H1 (cell line): ENCODE measurements at regions of chr10 and their contacts with region 1.

Region 1: DNA sequence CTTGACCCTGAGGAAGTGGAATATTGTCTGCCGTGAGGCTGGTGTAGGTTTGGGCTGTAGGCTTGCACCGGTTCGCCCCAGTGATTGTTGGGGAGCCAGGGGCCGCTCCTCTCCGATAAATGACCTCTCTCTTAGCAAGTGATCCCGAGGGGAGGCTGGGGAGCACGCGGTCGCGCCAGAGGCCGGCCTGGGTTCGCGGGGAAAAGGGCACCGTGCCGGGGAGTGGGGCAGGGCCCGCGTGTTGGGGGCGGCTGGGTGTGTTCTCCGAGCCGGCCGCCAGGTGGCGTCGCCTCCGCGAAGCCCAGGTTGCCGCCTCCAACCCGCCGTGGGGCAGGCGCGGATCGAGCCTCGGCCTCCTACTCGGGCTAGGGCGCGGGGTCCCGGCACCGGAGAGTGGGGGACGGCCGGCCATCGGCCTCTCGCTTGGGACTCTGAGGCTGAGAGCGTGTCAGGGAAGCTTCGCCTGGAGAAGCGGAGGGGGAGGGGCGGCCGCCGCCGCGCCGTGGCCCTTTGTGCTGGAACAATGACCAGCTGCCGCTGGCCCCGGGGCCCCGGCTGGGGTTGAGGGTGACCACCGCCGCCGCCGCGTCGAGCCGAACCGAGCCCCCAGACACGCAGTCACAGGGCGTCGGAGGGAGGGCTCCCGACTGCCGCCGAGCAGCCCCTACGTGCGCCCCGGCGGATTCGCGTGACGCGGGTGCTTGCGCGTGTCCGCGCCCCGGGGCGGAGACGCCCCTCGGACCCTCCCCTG is 442 bp upstream of the LZTS2 start:
- DNase-seq: peak in 1 of 2 experiments; percentile 87
- H3K4me3 ChIP-seq: peak overlapping the region; percentile 75 to 90 (median 76)
- H3K27ac ChIP-seq: peak overlapping the region; percentile 80; the same call in 1 of the 2 replicates
- H3K4me1 ChIP-seq: peaks cover 4 to 24% (median 14%) of the 10 kb centered on the region in 4 experiments
- H3K27me3 ChIP-seq: no peaks in the 10 kb centered on the region
- CTCF ChIP-seq: peak in 2 of 3 experiments; percentile 69 to 87; a peak in 3 of 4 replicates
- EP300 ChIP-seq: 0 out of 3 replicates have a peak, but pooled peaks of 1 of the 2 experiments have one; percentile 32
- POLR2A ChIP-seq: peak in 1 of 2 experiments; percentile 71; a peak in 1 of 3 replicates
- RAD21 ChIP-seq: peak; percentile 22 to 50; a peak in 2 of 4 replicates

Region 2: GRCh38 chr10:100969187-100970075 is 29.7 kb before region 1 on chr10 and contains the start of gene SEMA4G:
- CTCF ChIA-PET with region 1: interaction called, 15 read pairs
- POLR2A ChIA-PET with region 1: interaction called, 38 read pairs
- DNase-seq: peak; percentile 67 to 90
- H3K4me3 ChIP-seq: peak within 1 kb of the TSS; percentile 67 to 97 (median 72)
- H3K27ac ChIP-seq: no peak within 1 kb of the TSS
- H3K4me1 ChIP-seq: peaks cover 7 to 19% (median 10%) of the 10 kb centered on the region in 4 experiments
- H3K27me3 ChIP-seq: peaks cover 0 to 3% (median 1%) of the 10 kb centered on the region in 4 experiments; a peak in 1 of 7 replicates
- CTCF ChIP-seq: peak; percentile 66 to 80 (median 71)
- EP300 ChIP-seq: no peak
- POLR2A ChIP-seq: no peak
- RAD21 ChIP-seq: peak in 1 of 2 experiments; percentile 36; a peak in 1 of 4 replicates
- total RNA-seq, gene SEMA4G: 7.1 and 7.6 TPM in 2 replicates

Region 3: DNA sequence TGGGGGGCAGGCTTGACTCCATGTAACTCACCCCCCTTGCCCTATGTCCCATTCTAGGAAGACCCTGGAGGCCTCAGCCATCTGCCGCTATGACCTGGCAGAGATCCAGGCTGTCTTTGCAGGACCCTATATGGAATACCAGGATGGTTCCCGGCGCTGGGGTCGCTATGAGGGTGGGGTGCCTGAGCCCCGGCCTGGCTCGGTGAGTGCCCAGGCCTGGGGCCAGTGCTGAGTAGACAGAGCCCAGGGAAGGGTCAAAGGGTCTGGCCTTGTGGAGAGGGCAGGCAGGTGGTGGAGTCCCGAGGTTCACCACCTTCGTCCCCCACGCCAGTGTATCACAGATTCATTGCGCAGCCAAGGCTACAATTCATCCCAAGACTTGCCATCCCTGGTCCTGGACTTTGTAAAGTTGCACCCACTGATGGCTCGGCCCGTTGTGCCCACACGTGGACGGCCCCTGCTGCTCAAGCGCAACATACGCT is 19.3 kb before region 1 on chr10:
- CTCF ChIA-PET with region 1: interaction called, 352 read pairs
- POLR2A ChIA-PET with region 1: interaction called, 6 read pairs
- DNase-seq: no peak
- H3K4me3 ChIP-seq: no peak overlapping the region
- H3K27ac ChIP-seq: no peak overlapping the region
- H3K4me1 ChIP-seq: no peaks in the 10 kb centered on the region
- H3K27me3 ChIP-seq: no peaks in the 10 kb centered on the region
- CTCF ChIP-seq: no peak
- EP300 ChIP-seq: no peak
- POLR2A ChIP-seq: no peak
- RAD21 ChIP-seq: no peak

Region 4: DNA sequence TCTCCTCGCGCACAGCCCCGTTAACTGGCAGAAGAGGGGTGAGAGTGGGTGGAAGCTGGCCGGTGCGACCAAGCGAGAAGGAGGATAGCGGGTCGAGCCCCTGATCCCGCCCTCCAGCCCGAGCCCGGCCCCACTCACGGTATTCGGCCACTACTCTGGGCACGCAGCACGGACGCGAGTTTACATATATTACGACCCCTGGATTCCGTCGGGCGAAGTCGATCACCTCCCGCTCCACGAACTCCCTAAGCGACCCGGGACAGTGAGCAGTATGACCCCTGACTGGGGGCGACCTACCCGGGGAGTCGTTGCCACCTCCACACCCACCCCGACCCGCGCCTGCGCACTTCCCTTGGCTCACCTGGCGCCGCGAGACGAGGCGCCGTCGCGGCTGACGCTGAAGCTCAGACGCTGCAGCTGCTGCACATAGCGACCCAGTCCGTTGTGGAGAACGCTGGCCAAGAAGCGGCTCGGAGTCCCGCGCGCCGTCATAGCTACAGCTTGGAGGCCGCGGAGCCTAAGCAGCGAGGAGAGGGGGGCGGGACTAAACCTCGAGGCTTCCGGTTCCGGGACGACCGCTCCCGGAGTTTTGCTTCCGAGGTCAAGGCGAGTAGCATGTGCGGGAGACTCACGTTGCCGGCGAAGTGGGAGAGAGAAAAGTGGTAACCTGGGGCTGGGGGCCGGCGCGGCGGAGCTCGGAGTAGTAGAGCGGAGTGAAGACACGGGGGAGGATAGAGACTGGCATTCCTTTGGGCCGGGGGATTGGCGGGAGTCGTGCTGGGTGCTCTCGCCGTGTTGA is 12.0 kb before region 1 on chr10 and contains the starts of genes MRPL43 and TWNK:
- CTCF ChIA-PET with region 1: interaction called, 352 read pairs
- POLR2A ChIA-PET with region 1: interaction called, 34 read pairs
- DNase-seq: peak in 1 of 2 experiments; percentile 92
- H3K4me3 ChIP-seq: peak within 1 kb of the TSS; percentile 68 to 92 (median 80)
- H3K27ac ChIP-seq: peak within 1 kb of the TSS; percentile 37
- H3K4me1 ChIP-seq: peaks cover 0 to 12% (median 5%) of the 10 kb centered on the region in 4 experiments; a peak in 4 of 7 replicates
- H3K27me3 ChIP-seq: no peaks in the 10 kb centered on the region
- CTCF ChIP-seq: no peak
- EP300 ChIP-seq: no peak
- POLR2A ChIP-seq: peak; percentile 36 to 63; a peak in 2 of 3 replicates
- RAD21 ChIP-seq: no peak
- total RNA-seq, gene MRPL43: 74.1 and 80.9 TPM in 2 replicates
- total RNA-seq, gene TWNK: 32.5 and 34.9 TPM in 2 replicates

Region 5: DNA sequence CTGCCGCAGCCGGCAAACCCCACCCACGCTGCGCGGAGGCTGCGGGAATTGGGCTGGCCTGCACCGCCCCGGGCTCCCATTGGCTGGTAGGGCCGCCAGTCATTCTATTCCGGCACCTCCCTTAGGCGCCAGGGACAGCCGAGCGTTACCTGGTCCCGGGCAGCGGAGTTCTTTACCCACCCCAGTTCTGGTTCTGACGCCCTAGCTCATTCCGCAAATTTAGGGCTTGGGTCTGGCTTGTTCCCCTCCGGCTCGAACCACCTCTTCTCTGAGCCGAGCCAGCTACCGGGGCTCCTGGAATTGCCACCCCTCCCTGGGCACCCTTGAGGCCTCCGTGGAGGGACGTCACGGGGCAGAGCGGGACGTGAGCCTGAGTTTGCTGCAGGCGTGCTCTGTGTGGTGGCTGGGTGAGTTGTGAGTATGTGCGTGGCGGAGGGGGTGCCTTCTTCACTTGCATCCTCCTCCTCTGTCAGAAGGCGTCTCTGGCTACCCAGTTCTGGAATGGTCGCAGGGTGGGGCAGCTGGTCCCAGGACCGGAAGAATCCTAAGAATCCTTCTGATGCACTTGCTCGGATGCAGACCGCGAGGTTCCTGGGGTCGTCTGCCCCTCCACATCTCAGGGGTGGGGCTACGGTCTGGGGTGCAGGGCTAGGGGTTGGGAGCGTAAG is 32.1 kb after region 1 on chr10 and contains the starts of genes PDZD7 and SFXN3:
- CTCF ChIA-PET with region 1: interaction called, 11 read pairs
- POLR2A ChIA-PET with region 1: interaction called, 6 read pairs
- DNase-seq: peak in 1 of 2 experiments; percentile 98
- H3K4me3 ChIP-seq: peak within 1 kb of the TSS; percentile 41 to 66 (median 58)
- H3K27ac ChIP-seq: no peak within 1 kb of the TSS
- H3K4me1 ChIP-seq: peaks cover 0 to 26% (median 21%) of the 10 kb centered on the region in 4 experiments; a peak in 6 of 7 replicates
- H3K27me3 ChIP-seq: peaks cover 1 to 45% (median 36%) of the 10 kb centered on the region in 4 experiments
- CTCF ChIP-seq: no peak
- EP300 ChIP-seq: no peak
- POLR2A ChIP-seq: no peak
- RAD21 ChIP-seq: no peak
- total RNA-seq, gene PDZD7: 0.88 and 1.1 TPM in 2 replicates
- total RNA-seq, gene SFXN3: 2.8 and 3.1 TPM in 2 replicates

Region 6: DNA sequence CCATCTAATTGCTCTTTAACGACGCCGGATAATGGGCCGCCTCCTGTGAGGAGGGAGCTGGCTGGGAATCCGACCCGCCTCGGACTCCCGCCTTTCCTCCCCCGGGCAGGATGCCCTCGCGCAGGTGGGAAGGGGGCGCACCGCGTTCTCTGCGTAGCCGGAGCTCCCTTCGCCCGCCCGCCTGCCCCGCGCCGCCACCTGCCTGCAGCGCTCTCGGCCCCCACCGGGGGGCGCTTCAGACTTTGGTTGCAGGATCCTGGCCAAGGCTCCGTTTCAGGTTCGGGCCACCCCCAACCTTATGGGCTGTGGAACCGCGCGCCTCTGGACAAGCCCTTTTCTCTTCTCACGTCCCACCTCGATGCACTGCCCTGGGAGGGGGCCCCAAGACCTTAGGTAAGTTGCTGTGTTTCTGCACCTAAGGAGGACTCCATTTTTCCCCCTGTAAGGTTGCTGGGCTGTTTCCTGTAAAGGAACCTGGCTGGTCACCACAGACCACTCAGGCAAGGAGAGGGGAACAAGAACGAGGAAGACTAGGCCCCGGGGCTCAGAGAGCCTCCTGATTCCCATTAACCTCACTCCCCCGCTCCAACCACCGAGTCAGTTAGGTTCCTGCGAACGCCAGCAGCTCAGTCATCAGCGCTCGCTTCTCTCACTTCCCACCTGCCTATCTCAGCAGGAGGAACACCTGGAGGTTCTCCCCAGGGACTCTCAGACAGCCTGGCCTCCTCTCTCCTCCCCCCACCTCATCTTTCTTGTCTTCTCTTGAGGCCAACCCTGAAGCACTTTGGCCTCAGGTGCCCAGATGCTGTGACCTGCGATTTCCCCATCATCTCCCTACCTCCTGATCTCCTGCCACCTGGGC is 51.3 kb after region 1 on chr10:
- CTCF ChIA-PET with region 1: interaction called, 10 read pairs
- POLR2A ChIA-PET with region 1: no interaction called
- DNase-seq: peak in 1 of 2 experiments; percentile 99
- H3K4me3 ChIP-seq: peak overlapping the region in 2 of 4 experiments; percentile 10 to 49; a peak in 3 of 8 replicates
- H3K27ac ChIP-seq: no peak overlapping the region
- H3K4me1 ChIP-seq: peaks cover 9 to 23% (median 17%) of the 10 kb centered on the region in 4 experiments
- H3K27me3 ChIP-seq: peaks cover 38 to 66% (median 60%) of the 10 kb centered on the region in 4 experiments
- CTCF ChIP-seq: peak; percentile 73 to 95 (median 84)
- EP300 ChIP-seq: no peak
- POLR2A ChIP-seq: no peak
- RAD21 ChIP-seq: peak; percentile 64 to 74